Right ventricle myocardium inferior (tissue), 1 donor: ENCODE measurements at regions of chr10 and their contacts with region 1.

Region 1: DNA sequence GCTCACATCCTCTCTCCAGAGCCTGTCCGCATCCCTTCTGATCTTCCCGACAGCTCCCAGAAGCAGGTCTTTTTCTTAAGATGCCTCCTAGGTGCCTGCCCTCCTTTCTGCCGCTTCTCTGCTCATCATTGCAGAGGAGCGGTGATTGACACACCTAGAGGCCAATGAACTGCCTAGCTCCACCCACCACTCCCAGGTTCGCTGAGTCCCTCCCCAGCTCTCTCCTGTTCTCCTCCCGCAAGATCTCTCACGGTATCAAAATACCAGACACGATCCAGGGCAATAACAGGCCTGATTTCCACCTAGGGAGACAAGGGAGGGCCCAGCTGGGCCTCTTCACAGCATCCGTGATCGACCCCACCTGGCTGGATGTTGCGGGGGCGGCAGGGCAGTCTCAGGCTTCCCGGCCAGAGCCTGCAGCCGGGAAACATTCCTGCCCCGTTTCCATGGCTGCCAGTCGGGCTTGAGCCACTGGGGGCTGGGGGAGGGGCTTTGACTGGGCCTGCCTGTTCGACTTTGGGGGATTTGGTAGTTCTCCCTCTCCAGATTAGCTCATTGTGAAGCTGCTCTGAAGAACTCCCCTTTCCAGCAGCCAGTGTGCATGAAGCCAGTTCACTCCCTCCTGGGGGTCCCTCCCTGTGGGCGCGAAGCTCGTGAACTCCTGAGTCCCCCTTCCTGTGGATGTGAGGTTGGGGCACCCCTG is 373.5 kb downstream of the RPS24 start:
- DNase-seq: peak; percentile 81
- ATAC-seq: peak; percentile 61

Region 2: GRCh38 chr10:78424719-78425118 is 17.6 kb after region 1 on chr10:
- intact Hi-C with region 1: no loop called
- DNase-seq: no peak
- ATAC-seq: no peak

Region 3: GRCh38 chr10:78458983-78459638 is 52.0 kb after region 1 on chr10:
- intact Hi-C with region 1: no loop called
- DNase-seq: no peak
- ATAC-seq: no peak

Region 4: GRCh38 chr10:78579995-78580394 is 172.8 kb after region 1 on chr10:
- intact Hi-C with region 1: loop called (anchors 10 kb)
- DNase-seq: peak; percentile 84
- ATAC-seq: peak; percentile 77